Mammary epithelial cell (primary cell): ENCODE measurements at regions of chr7 and their contacts with region 1.

Region 1: DNA sequence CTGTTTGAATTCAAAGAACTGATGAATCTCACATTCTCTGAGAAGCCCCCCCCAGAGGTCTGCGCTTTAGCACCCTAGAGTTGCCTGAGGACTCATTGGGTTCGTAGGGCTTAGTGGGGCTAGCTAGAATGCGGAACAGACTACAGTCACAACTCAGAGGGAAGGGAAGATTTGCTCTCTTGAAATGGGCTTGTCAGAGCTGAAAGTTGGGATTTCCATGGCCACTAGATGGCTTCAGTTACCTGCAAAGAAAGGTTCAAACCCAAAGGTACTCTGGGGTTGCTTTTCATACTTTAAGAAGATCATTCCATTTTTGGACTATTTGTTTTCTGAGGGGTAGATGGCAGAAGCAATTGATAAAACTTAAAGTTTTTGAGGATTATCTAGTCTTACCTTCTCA is 205.0 kb downstream of the BBS9 start:
- DNase-seq: peak; percentile 6
- H3K4me3 ChIP-seq: no peak overlapping the region
- H3K27ac ChIP-seq: no peak overlapping the region
- H3K4me1 ChIP-seq: no peaks in the 10 kb centered on the region
- H3K27me3 ChIP-seq: no peaks in the 10 kb centered on the region
- CTCF ChIP-seq: peak; percentile 47 to 66

Region 2: GRCh38 chr7:32378988-32379387 is 955.4 kb before region 1 on chr7:
- CTCF ChIA-PET with region 1: no interaction called
- dilution Hi-C with region 1: no loop called
- in situ Hi-C with region 1: no loop called
- intact Hi-C with region 1: no loop called
- DNase-seq: peak; percentile 40
- H3K4me3 ChIP-seq: no peak overlapping the region
- H3K27ac ChIP-seq: no peak overlapping the region
- H3K4me1 ChIP-seq: no peaks in the 10 kb centered on the region
- H3K27me3 ChIP-seq: no peaks in the 10 kb centered on the region
- CTCF ChIP-seq: peak in 1 of 2 donors; percentile 31

Region 3: GRCh38 chr7:33431543-33431942 is 97.2 kb after region 1 on chr7:
- CTCF ChIA-PET with region 1: interaction called, 16 read pairs
- dilution Hi-C with region 1: no loop called
- in situ Hi-C with region 1: no loop called
- intact Hi-C with region 1: no loop called
- DNase-seq: no peak
- H3K4me3 ChIP-seq: no peak overlapping the region
- H3K27ac ChIP-seq: no peak overlapping the region
- H3K4me1 ChIP-seq: no peaks in the 10 kb centered on the region
- H3K27me3 ChIP-seq: no peaks in the 10 kb centered on the region
- CTCF ChIP-seq: no peak